ENCODE measurements at regions of chr9 and their contacts with region 1.

Region 1: GRCh38 chr9:87497604-87498045 is at the start of gene DAPK1:
- DNase-seq: peak; percentile 79 to 83
- ATAC-seq: peak; percentile 83 to 91
- H3K4me3 ChIP-seq: peak within 1 kb of the TSS; percentile 88
- H3K27ac ChIP-seq: peak within 1 kb of the TSS; percentile 94 to 98
- H3K4me1 ChIP-seq: peaks cover 44% of the 10 kb centered on the region
- CTCF ChIP-seq: peak; percentile 29; the same call in 2 of the 3 replicates
- EP300 ChIP-seq: no peak
- POLR2A ChIP-seq: peak; percentile 37
- RAD21 ChIP-seq: peak; percentile 30 to 53; a peak in 4 of 5 replicates
- polyA plus RNA-seq, gene DAPK1: 67.2 and 68.5 TPM in 2 replicates

Region 2: GRCh38 chr9:87336914-87337333 is 160.7 kb before region 1 on chr9:
- CTCF ChIA-PET with region 1: interaction called, 39 read pairs
- POLR2A ChIA-PET with region 1: interaction called, 4 read pairs
- DNase-seq: peak; percentile 44 to 88
- ATAC-seq: peak; percentile 73 to 90
- H3K4me3 ChIP-seq: peak overlapping the region; percentile 48
- H3K27ac ChIP-seq: peak overlapping the region; percentile 73 to 85
- H3K4me1 ChIP-seq: peaks cover 17% of the 10 kb centered on the region
- CTCF ChIP-seq: peak; percentile 92
- EP300 ChIP-seq: no peak
- POLR2A ChIP-seq: no peak
- RAD21 ChIP-seq: peak; percentile 98

Region 3: DNA sequence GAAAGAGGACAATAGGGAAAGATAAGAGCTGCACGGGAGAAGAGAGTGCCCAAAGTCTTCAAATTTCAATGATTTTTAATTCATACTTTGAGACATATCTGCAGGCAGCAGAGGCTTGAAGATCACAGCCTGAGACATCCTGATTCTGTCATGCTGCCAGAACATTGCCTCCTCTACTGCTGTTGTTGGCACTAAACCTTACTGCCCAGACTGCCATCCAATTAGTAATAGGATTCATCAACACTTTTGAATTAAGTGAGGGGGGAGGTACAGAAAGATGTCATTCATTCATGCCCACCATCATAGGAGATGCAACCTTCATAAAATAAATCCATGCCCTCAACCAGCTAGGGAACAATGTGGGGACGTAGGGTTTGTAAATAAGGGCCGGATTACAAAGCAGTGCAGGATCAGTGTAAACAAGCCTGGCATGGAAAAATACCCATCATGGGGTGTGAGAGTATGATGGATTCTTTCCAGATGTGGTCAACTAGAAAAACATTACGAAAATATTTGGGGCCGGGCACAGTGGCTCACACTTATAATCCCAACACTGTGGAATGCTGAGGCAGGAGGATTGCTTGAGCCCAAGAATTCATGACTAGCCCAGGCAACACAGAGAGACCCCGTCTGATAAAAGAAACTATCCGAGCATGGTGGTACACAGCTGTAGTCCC is 122.1 kb before region 1 on chr9:
- CTCF ChIA-PET with region 1: interaction called, 30 read pairs
- POLR2A ChIA-PET with region 1: interaction called, 16 read pairs
- DNase-seq: peak; percentile 66 to 90
- ATAC-seq: peak; percentile 64 to 68
- H3K4me3 ChIP-seq: no peak overlapping the region
- H3K27ac ChIP-seq: peak overlapping the region; percentile 92 to 97
- H3K4me1 ChIP-seq: peaks cover 68% of the 10 kb centered on the region
- CTCF ChIP-seq: no peak
- EP300 ChIP-seq: peak; percentile 70 to 82; a peak in 3 of 5 replicates
- POLR2A ChIP-seq: no peak
- RAD21 ChIP-seq: peak in 1 of 2 experiments; percentile 46; a peak in 4 of 5 replicates

Region 4: DNA sequence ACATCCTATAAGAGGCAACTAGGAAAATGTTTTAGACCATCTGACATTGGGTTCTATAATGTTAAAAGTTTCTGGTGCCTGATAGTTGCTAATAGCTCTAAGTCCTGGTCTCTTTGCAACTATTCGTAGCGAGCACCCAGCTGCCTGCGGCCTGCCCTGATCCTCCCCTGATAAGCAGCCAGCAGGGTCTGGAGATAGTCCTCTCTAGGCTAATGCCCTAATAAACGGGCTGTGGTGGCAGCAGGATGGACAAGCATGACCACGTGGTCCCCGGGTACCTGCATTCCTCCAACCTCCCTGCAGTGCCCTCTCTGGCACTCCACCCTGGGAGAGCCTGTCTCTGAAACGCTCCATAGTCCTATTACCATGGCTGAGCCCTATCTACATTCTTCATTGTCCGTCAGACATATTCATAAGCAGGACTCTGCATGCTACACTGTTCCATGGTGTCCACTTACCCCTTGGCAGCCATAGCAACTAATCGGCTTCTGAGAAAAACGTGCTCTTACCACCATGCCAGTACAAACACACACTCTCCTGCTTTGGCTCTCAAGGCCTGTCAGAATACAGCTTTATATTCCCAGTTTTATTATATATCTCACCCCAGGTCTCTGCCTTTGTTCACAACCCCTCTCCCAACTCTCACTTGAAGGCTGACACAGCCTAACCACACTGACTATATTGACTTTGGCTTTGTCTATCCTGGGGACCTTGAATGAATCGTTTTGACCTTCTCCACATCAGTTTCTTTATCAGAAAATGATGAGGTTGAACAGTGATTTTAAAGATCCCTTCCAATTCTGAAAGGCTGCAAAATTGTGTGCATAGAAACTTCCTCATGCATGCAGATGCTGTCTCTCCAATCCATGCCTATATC is 49.8 kb before region 1 on chr9:
- CTCF ChIA-PET with region 1: no interaction called
- POLR2A ChIA-PET with region 1: no interaction called
- DNase-seq: no peak
- ATAC-seq: no peak; a peak in 1 of 6 replicates
- H3K4me3 ChIP-seq: no peak overlapping the region
- H3K27ac ChIP-seq: no peak overlapping the region
- H3K4me1 ChIP-seq: no peaks in the 10 kb centered on the region
- CTCF ChIP-seq: no peak
- EP300 ChIP-seq: no peak
- POLR2A ChIP-seq: no peak
- RAD21 ChIP-seq: no peak

Measured in A549 (cell line).